AG04450 (cell line): ENCODE measurements at regions of chr6 and their contacts with region 1.

Region 1: DNA sequence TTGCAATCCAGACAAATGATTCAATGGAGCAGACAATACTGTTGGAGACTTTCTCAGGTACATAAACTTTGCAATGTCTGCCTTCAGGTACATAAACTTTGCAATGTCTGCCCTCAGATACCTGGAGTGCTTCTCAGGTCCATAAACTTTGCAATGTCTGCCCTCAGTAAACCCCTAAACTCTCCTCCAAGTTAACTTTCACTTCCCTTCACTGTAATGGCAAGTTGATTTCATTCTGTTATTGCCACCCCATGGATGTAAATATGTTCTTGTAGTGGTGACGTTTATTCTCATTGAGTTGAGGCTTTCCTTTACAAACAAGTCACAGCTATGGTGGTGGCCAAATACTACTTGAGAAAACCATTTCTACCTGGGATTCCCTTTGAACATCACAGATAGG is 338.8 kb downstream of the EPM2A start:
- DNase-seq: no peak
- H3K4me3 ChIP-seq: no peak overlapping the region
- H3K27ac ChIP-seq: no peak overlapping the region
- H3K27me3 ChIP-seq: no peaks in the 10 kb centered on the region
- CTCF ChIP-seq: no peak

Region 2: GRCh38 chr6:145275787-145276186 is 120.7 kb before region 1 on chr6:
- CTCF ChIA-PET with region 1: no interaction called
- POLR2A ChIA-PET with region 1: interaction called, 11 read pairs
- DNase-seq: no peak
- H3K4me3 ChIP-seq: no peak overlapping the region
- H3K27ac ChIP-seq: no peak overlapping the region
- H3K27me3 ChIP-seq: no peaks in the 10 kb centered on the region
- CTCF ChIP-seq: no peak